ENCODE measurements at regions of chr13 and their contacts with region 1.

Region 1: DNA sequence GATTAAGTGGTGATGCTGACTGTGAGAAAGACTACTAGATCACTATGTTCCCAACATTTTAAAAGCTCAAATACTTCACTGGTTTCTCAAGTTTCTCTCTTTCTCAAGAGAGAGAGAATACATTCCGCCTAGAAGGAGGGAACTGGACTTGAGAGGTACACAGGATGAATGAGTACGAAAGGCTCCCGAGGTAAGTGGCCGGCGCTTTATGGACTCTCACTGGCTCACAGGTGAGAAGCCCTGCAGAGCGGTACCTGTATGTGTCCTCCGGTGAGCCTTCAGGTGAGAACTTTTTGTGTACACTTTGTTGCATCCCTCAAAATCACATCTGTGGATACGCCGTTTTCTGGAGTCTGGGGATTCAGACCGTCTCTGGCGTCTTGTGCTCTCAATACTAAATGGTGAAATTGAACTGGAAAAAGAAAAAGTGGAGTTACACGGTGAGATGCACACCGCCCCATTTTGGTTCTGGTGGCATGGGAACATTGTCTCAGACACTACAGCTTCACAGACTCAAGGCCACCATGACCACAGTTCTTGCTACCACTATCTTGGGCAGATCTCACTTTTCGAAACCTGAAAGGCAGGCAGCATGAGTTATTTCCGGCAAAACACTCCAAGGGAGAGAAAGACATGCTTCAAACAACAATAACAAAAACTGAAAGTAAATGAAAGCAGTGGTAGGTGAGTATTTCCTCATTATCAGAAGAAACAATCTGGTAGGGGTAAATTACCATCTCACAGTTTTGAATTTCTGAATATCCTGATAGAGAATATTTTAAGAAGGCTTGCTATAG is 418.9 kb downstream of the KLF12 start:
- DNase-seq: peak; percentile 77
- H3K4me3 Mint-ChIP-seq: peak overlapping the region; percentile 33
- H3K27ac Mint-ChIP-seq: peak overlapping the region; percentile 75
- H3K4me1 Mint-ChIP-seq: peaks cover 54% of the 10 kb centered on the region
- H3K27me3 Mint-ChIP-seq: no peaks in the 10 kb centered on the region

Region 2: GRCh38 chr13:72864142-72865011 is 850.9 kb before region 1 on chr13:
- CTCF ChIA-PET with region 1: no interaction called
- POLR2A ChIA-PET with region 1: no interaction called
- intact Hi-C with region 1: loop called (anchors 1 kb)
- DNase-seq: peak; percentile 51
- H3K4me3 Mint-ChIP-seq: peak overlapping the region; percentile 17
- H3K27ac Mint-ChIP-seq: peak overlapping the region; percentile 83
- H3K4me1 Mint-ChIP-seq: peaks cover 20% of the 10 kb centered on the region
- H3K27me3 Mint-ChIP-seq: no peaks in the 10 kb centered on the region

Region 3: GRCh38 chr13:73228546-73228945 is 486.8 kb before region 1 on chr13:
- CTCF ChIA-PET with region 1: no interaction called
- POLR2A ChIA-PET with region 1: no interaction called
- intact Hi-C with region 1: loop called (anchors 1 kb)
- DNase-seq: peak; percentile 16
- H3K4me3 Mint-ChIP-seq: no peak overlapping the region
- H3K27ac Mint-ChIP-seq: no peak overlapping the region
- H3K4me1 Mint-ChIP-seq: peaks cover 38% of the 10 kb centered on the region
- H3K27me3 Mint-ChIP-seq: peaks cover 4% of the 10 kb centered on the region

Region 4: GRCh38 chr13:73421310-73421912 is 293.9 kb before region 1 on chr13:
- CTCF ChIA-PET with region 1: no interaction called
- POLR2A ChIA-PET with region 1: no interaction called
- intact Hi-C with region 1: loop called (anchors 1 kb)
- DNase-seq: peak; percentile 47
- H3K4me3 Mint-ChIP-seq: no peak overlapping the region
- H3K27ac Mint-ChIP-seq: no peak overlapping the region
- H3K4me1 Mint-ChIP-seq: peaks cover 8% of the 10 kb centered on the region
- H3K27me3 Mint-ChIP-seq: peaks cover 5% of the 10 kb centered on the region

Region 5: DNA sequence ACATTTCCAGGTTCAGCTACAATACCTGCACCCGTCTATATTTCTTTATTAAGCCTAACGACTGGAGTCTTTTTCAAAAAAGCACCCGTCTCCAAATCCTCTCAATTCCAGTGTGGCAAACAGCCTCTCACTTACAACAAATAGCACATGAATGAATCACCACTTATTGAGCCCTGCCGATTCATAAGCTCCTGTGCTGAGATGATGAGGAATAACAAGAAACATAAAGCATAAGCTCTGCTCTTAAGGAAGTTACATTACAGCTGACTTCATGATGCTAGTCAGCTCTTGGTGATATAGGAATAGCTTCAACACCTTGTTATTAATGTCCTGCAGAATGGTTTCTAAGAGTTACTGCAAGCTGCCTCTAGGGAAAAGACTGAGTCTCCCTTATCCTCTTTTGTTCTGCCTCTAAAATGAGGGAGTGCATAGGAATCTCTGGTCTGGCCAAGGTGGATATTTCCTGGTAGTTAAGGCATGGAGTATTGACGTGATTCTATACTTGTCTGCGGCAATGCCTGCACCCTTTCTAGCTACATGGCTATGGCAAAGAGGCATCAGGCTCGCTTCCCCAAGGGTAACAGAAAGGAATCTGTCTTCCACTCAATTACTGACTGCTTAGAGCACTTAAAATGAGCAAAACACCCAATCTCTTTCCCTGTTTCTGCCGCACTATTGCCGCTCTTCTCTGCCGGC is 223.2 kb after region 1 on chr13:
- CTCF ChIA-PET with region 1: no interaction called
- POLR2A ChIA-PET with region 1: no interaction called
- intact Hi-C with region 1: loop called (anchors 5 kb)
- DNase-seq: no peak
- H3K4me3 Mint-ChIP-seq: no peak overlapping the region
- H3K27ac Mint-ChIP-seq: no peak overlapping the region
- H3K4me1 Mint-ChIP-seq: peaks cover 77% of the 10 kb centered on the region
- H3K27me3 Mint-ChIP-seq: no peaks in the 10 kb centered on the region

Region 6: GRCh38 chr13:75326173-75327134 is 1611.1 kb after region 1 on chr13:
- CTCF ChIA-PET with region 1: no interaction called
- POLR2A ChIA-PET with region 1: no interaction called
- intact Hi-C with region 1: loop called (anchors 10 kb)
- DNase-seq: peak; percentile 78
- H3K4me3 Mint-ChIP-seq: peak overlapping the region; percentile 89
- H3K27ac Mint-ChIP-seq: peak overlapping the region; percentile 95
- H3K4me1 Mint-ChIP-seq: peaks cover 35% of the 10 kb centered on the region
- H3K27me3 Mint-ChIP-seq: no peaks in the 10 kb centered on the region

Measured in activated CD4-positive, alpha-beta memory T cell treated with anti-CD3 and anti-CD28 coated beads for 36 hours (primary cell).